ENCODE measurements at regions of chr17 and their contacts with region 1.

Region 1: DNA sequence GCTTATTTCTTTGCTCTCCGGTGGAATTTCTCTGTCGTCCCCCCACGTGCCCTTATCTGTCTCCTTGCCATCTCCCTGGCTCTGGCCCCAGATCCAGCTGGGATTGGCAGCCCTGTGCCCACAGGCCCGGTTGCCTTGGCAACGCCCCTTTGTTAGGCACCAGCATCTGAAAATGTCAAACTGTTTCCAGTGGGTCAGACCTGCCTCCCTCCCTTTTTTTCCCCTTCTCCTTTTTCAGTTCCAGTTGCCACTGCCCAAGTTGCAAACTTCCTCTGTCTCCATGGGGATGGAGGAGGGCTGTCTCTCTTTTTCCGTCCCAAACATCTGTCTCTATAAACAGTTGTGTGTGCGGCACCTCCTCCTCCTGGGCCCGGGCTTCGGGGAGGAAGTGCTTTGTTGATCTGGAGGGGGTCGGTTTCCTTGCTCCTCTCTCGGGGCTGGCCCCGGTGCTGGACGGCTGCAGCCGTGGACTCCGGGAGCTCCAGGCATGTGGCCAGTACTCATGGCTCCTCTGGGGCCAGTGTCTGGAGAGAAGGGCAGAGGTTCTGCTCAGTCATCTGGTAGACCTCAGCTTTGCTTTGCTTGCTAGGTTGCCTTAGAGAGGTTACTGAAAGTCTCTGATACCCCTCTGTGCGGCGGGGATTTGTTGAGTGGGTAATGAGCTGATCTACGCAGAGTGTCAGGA is 35.3 kb downstream of the SOCS3 start:
- DNase-seq: peak; percentile 97
- H3K4me3 ChIP-seq: no peak overlapping the region
- H3K27ac ChIP-seq: peak overlapping the region; percentile 90
- H3K4me1 ChIP-seq: peaks cover 32% of the 10 kb centered on the region
- H3K27me3 ChIP-seq: no peaks in the 10 kb centered on the region
- CTCF ChIP-seq: no peak
- POLR2A ChIP-seq: no peak

Region 2: DNA sequence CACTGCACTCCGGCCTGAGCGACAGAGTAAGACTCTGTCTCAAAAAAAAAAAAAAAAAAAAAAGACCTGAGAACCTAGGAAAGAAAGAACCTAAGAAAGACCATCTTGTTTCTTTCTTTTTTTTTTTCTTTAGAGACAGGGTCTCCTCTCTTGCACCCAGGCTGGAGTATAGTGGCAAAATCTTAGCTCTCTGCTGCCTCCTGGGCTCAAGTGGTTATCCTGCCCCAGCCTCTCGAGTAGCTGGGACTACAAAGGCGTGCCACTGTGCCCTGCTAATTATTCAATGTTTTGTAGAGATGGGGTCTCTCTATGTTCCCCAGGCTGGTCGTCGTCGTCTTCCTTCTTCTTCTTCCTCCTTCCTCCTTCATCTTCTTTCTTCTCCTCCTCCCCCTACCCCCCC is 118.2 kb before region 1 on chr17:
- CTCF ChIA-PET with region 1: no interaction called
- POLR2A ChIA-PET with region 1: no interaction called
- dilution Hi-C with region 1: no loop called
- intact Hi-C with region 1: no loop called
- DNase-seq: no peak
- H3K4me3 ChIP-seq: no peak overlapping the region
- H3K27ac ChIP-seq: no peak overlapping the region
- H3K4me1 ChIP-seq: no peaks in the 10 kb centered on the region
- H3K27me3 ChIP-seq: no peaks in the 10 kb centered on the region
- CTCF ChIP-seq: no peak
- POLR2A ChIP-seq: no peak

Region 3: GRCh38 chr17:78272181-78272913 is 52.2 kb before region 1 on chr17:
- CTCF ChIA-PET with region 1: no interaction called
- POLR2A ChIA-PET with region 1: no interaction called
- dilution Hi-C with region 1: no loop called
- intact Hi-C with region 1: no loop called
- DNase-seq: no peak
- H3K4me3 ChIP-seq: no peak overlapping the region
- H3K27ac ChIP-seq: no peak overlapping the region
- H3K4me1 ChIP-seq: peaks cover 2% of the 10 kb centered on the region
- H3K27me3 ChIP-seq: peaks cover 22 to 25% of the 10 kb centered on the region in 2 experiments
- CTCF ChIP-seq: no peak
- POLR2A ChIP-seq: no peak

Region 4: DNA sequence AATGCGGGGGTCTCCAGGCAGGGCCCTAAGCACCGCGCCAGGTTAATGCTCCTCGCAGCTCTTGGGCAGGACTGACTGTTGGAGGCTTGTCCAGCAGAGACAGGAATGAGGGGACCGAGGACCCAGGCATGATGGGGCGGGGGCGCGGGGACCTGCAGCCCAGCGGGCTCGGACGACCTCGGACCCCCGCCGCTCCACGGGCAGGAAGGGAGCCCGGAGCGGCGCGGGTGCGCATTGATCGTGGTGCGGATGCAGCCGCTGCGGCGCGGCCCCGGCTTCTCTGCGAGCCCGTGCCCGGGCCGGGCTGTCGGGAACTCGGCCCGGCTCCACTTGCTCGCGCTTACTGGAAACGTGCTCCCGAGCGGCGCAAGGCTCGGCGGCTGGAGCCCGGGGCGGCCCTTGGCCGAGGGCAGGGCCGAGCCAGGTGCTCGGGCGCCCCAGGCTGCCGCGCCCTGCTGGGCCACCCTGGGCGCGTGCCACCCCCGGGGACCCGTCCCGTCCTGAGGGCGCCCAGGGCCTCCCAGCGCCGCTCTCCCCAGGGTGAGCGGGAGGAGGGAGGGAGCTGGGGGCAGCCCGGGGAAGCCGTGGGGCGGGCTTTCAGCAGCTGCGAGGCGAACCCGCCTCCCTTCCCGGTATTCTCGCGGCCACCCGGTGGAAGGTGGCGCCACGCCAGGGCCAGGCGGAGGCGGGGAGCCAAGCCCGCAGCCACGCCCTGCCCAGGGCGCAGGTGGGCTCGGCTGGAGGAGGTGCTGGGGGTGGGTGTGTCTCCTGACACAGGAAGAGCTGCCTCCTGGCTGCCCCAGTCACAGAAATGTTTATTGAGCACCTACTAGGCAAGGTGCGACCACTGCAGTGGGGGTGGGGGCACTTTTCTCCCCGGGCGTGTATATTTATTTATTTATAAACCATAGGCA is 10.5 kb before region 1 on chr17:
- CTCF ChIA-PET with region 1: interaction called, 6 read pairs
- POLR2A ChIA-PET with region 1: interaction called, 3 read pairs
- dilution Hi-C with region 1: no loop called
- intact Hi-C with region 1: loop called (anchors 1 kb)
- DNase-seq: peak; percentile 65
- H3K4me3 ChIP-seq: peak overlapping the region in 2 of 3 experiments; percentile 32 to 38
- H3K27ac ChIP-seq: peak overlapping the region; percentile 10
- H3K4me1 ChIP-seq: peaks cover 29% of the 10 kb centered on the region
- H3K27me3 ChIP-seq: no peaks in the 10 kb centered on the region
- CTCF ChIP-seq: no peak
- POLR2A ChIP-seq: peak; percentile 54

Region 5: GRCh38 chr17:78341559-78342448 is 17.3 kb after region 1 on chr17:
- CTCF ChIA-PET with region 1: interaction called, 17 read pairs
- POLR2A ChIA-PET with region 1: interaction called, 6 read pairs
- dilution Hi-C with region 1: no loop called
- intact Hi-C with region 1: loop called (anchors 1 kb)
- DNase-seq: peak; percentile 43
- H3K4me3 ChIP-seq: peak overlapping the region in 2 of 3 experiments; percentile 17 to 26
- H3K27ac ChIP-seq: peak overlapping the region; percentile 82
- H3K4me1 ChIP-seq: peaks cover 36% of the 10 kb centered on the region
- H3K27me3 ChIP-seq: no peaks in the 10 kb centered on the region
- CTCF ChIP-seq: no peak
- POLR2A ChIP-seq: peak; percentile 27

Region 6: GRCh38 chr17:78397681-78398101 is 73.2 kb after region 1 on chr17:
- CTCF ChIA-PET with region 1: no interaction called
- POLR2A ChIA-PET with region 1: no interaction called
- dilution Hi-C with region 1: no loop called
- intact Hi-C with region 1: no loop called
- DNase-seq: no peak
- H3K4me3 ChIP-seq: no peak overlapping the region
- H3K27ac ChIP-seq: no peak overlapping the region
- H3K4me1 ChIP-seq: peaks cover 14% of the 10 kb centered on the region
- H3K27me3 ChIP-seq: no peaks in the 10 kb centered on the region
- CTCF ChIP-seq: no peak
- POLR2A ChIP-seq: no peak

Measured in endothelial cell of umbilical vein (primary cell).